Tibial artery (tissue), 4 donors: ENCODE measurements at regions of chr17 and their contacts with region 1.

Region 1: GRCh38 chr17:76005263-76006149 is 4.9 kb downstream of the CDK3 start:
- DNase-seq: peak; percentile 69 to 83
- H3K4me3 ChIP-seq: no peak overlapping the region
- H3K27ac ChIP-seq: no peak overlapping the region
- H3K4me1 ChIP-seq: peaks cover 0 to under 1% (median 0%) of the 10 kb centered on the region in 4 donors
- H3K27me3 ChIP-seq: no peaks in the 10 kb centered on the region
- CTCF ChIP-seq: peak; percentile 54 to 64

Region 2: GRCh38 chr17:75904749-75905521 is 100.6 kb before region 1 on chr17 and contains the start of gene MRPL38:
- intact Hi-C with region 1: loop called (anchors 2 kb)
- DNase-seq: peak; percentile 89 to 96
- H3K4me3 ChIP-seq: peak within 1 kb of the TSS; percentile 75 to 79
- H3K27ac ChIP-seq: peak within 1 kb of the TSS; percentile 84 to 91
- H3K4me1 ChIP-seq: peaks cover 0 to 14% (median 8%) of the 10 kb centered on the region in 4 donors
- H3K27me3 ChIP-seq: no peaks in the 10 kb centered on the region
- CTCF ChIP-seq: peak; percentile 96 to 100

Region 3: DNA sequence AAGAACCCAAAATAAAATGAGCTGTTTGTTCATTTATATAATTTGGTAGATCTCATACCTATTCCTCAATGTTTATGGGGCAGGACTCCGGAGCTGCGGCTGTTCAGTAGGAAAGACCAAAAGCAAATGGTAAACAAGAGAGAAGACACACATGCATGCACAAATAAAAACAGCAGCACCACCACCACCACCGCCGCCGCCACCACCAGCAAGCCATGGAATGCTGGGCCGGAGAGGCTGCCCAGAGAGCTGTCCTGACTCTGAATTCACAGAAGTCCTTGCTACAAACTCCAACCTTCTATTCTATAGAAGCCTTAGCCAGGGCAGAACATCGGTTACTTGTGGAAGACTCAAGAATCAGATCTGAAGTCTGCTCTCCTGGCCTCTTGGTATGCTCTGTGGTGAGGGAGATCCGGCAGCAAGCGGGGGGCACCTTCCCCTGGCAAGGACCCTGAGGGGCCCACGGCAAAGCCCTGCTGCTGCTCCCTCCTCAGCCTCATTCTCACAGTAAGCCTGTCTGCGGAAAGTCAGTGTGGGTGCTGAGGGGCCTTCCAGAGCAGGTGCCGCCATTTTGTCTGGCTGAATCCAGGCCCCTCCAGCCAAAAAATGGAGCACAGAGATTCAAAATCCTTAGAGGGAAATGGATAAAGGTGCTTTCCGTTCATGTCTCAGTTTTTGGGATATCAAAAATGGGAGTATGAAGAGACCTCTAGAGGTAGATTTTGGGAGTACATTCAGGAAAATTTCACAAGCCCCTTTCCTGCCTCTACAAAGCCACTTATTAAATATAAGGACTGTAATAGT is 141.9 kb after region 1 on chr17:
- intact Hi-C with region 1: no loop called
- DNase-seq: no peak
- H3K4me3 ChIP-seq: no peak overlapping the region
- H3K27ac ChIP-seq: no peak overlapping the region
- H3K4me1 ChIP-seq: no peaks in the 10 kb centered on the region
- H3K27me3 ChIP-seq: peaks cover 0 to 8% of the 10 kb centered on the region in 2 donors
- CTCF ChIP-seq: peak; percentile 57 to 58

Region 4: GRCh38 chr17:76337413-76337777 is 331.9 kb after region 1 on chr17:
- intact Hi-C with region 1: no loop called
- DNase-seq: peak in 1 of 2 donors; percentile 12
- H3K4me3 ChIP-seq: no peak overlapping the region
- H3K27ac ChIP-seq: peak overlapping the region in 1 of 2 donors; percentile 49
- H3K4me1 ChIP-seq: peaks cover 0 to 24% (median 6%) of the 10 kb centered on the region in 4 donors
- H3K27me3 ChIP-seq: no peaks in the 10 kb centered on the region
- CTCF ChIP-seq: no peak